ENCODE measurements at regions of chr5 and their contacts with region 1.

Region 1: GRCh38 chr5:23977997-23978396 is 470.6 kb downstream of the PRDM9 start:
- DNase-seq: peak; percentile 27 to 92
- H3K4me3 ChIP-seq: no peak overlapping the region
- H3K27ac ChIP-seq: no peak overlapping the region
- H3K4me1 ChIP-seq: no peaks in the 10 kb centered on the region; a peak in 1 of 7 replicates
- H3K27me3 ChIP-seq: no peaks in the 10 kb centered on the region
- CTCF ChIP-seq: peak; percentile 38 to 97 (median 84)
- EP300 ChIP-seq: no peak
- POLR2A ChIP-seq: no peak
- RAD21 ChIP-seq: peak; percentile 83 to 90

Region 2: GRCh38 chr5:23820765-23821471 is 157.1 kb before region 1 on chr5:
- CTCF ChIA-PET with region 1: interaction called, 19 read pairs
- POLR2A ChIA-PET with region 1: no interaction called
- DNase-seq: no peak
- H3K4me3 ChIP-seq: no peak overlapping the region
- H3K27ac ChIP-seq: no peak overlapping the region
- H3K4me1 ChIP-seq: no peaks in the 10 kb centered on the region
- H3K27me3 ChIP-seq: no peaks in the 10 kb centered on the region
- CTCF ChIP-seq: peak in 2 of 3 experiments; percentile 52 to 58; a peak in 2 of 4 replicates
- EP300 ChIP-seq: no peak
- POLR2A ChIP-seq: no peak
- RAD21 ChIP-seq: peak; percentile 75

Region 3: DNA sequence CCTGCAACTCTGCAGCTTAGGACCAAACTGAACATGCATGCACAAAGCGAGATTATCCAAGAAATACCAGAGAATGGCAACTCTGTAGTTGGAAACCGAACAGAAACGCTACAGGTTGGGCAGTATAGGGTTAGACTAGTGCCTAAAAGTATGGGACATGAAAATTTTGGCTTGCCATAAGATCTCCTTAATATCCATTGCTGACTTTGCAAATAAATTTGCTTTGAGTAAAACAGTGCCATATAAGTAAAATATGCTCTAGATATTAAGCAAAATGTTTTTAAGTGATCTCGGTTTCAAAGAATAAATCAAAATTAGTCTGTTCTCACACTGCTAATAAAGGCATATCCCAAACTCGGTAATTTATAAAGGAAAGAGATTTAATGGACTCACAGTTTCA is 14.5 kb before region 1 on chr5:
- CTCF ChIA-PET with region 1: interaction called, 17 read pairs
- POLR2A ChIA-PET with region 1: no interaction called
- DNase-seq: no peak
- H3K4me3 ChIP-seq: no peak overlapping the region
- H3K27ac ChIP-seq: no peak overlapping the region
- H3K4me1 ChIP-seq: no peaks in the 10 kb centered on the region
- H3K27me3 ChIP-seq: no peaks in the 10 kb centered on the region
- CTCF ChIP-seq: no peak
- EP300 ChIP-seq: no peak
- POLR2A ChIP-seq: no peak
- RAD21 ChIP-seq: no peak

Region 4: DNA sequence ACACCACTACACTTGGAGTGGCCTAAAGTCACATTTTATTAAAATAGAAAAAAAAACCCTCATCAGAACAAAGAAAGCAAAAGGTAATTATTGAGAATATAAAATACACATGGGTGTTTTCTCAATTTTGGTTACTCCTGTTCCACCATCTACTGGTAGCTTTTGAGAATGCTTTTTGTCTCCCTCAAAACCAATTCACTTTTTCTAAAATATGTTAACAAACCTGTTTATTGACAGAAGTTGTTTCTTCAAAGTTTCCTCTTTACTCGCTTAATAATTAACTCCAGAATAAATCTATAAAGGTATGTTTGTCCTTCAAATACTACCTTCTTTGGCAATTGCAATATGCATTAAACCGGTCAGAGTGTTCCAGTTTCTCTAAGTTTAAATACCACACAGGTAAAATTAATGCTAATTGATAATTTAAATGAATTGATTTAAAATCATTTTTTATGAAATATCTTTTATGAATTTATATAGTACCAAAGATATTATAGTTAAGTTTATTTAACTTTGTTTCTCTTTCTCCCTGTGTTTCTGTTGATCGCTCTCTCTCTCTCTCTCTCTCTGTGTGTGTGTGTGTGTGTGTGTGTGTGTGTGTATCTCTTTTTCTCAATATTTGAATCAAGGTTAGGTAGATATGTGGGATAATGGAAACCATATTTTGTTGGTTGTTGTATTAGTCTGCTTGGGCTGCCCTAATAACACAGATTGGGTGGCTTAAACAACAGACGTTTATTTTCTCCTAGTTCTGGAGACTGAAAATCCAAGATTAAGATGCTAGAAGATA is 16.8 kb after region 1 on chr5:
- CTCF ChIA-PET with region 1: interaction called, 17 read pairs
- POLR2A ChIA-PET with region 1: no interaction called
- DNase-seq: no peak
- H3K4me3 ChIP-seq: no peak overlapping the region
- H3K27ac ChIP-seq: no peak overlapping the region
- H3K4me1 ChIP-seq: no peaks in the 10 kb centered on the region
- H3K27me3 ChIP-seq: peaks cover 0 to 1% (median 0%) of the 10 kb centered on the region in 4 experiments; a peak in 1 of 7 replicates
- CTCF ChIP-seq: peak in 2 of 3 experiments; percentile 26 to 27; a peak in 2 of 4 replicates
- EP300 ChIP-seq: no peak
- POLR2A ChIP-seq: no peak
- RAD21 ChIP-seq: peak in 1 of 2 experiments; percentile 41; a peak in 3 of 4 replicates

Region 5: GRCh38 chr5:24080046-24080445 is 102.0 kb after region 1 on chr5:
- CTCF ChIA-PET with region 1: no interaction called
- POLR2A ChIA-PET with region 1: no interaction called
- DNase-seq: no peak
- H3K4me3 ChIP-seq: no peak overlapping the region
- H3K27ac ChIP-seq: no peak overlapping the region
- H3K4me1 ChIP-seq: no peaks in the 10 kb centered on the region
- H3K27me3 ChIP-seq: no peaks in the 10 kb centered on the region
- CTCF ChIP-seq: no peak
- EP300 ChIP-seq: no peak
- POLR2A ChIP-seq: no peak
- RAD21 ChIP-seq: no peak

Region 6: GRCh38 chr5:24110004-24110615 is 132.1 kb after region 1 on chr5:
- CTCF ChIA-PET with region 1: interaction called, 25 read pairs
- POLR2A ChIA-PET with region 1: no interaction called
- DNase-seq: no peak
- H3K4me3 ChIP-seq: no peak overlapping the region
- H3K27ac ChIP-seq: no peak overlapping the region
- H3K4me1 ChIP-seq: no peaks in the 10 kb centered on the region
- H3K27me3 ChIP-seq: no peaks in the 10 kb centered on the region
- CTCF ChIP-seq: peak in 2 of 3 experiments; percentile 43 to 56; a peak in 2 of 4 replicates
- EP300 ChIP-seq: no peak
- POLR2A ChIP-seq: no peak
- RAD21 ChIP-seq: peak; percentile 73 to 80

Measured in H1 (cell line).